ENCODE measurements at regions of chr17 and their contacts with region 1.

Region 1: DNA sequence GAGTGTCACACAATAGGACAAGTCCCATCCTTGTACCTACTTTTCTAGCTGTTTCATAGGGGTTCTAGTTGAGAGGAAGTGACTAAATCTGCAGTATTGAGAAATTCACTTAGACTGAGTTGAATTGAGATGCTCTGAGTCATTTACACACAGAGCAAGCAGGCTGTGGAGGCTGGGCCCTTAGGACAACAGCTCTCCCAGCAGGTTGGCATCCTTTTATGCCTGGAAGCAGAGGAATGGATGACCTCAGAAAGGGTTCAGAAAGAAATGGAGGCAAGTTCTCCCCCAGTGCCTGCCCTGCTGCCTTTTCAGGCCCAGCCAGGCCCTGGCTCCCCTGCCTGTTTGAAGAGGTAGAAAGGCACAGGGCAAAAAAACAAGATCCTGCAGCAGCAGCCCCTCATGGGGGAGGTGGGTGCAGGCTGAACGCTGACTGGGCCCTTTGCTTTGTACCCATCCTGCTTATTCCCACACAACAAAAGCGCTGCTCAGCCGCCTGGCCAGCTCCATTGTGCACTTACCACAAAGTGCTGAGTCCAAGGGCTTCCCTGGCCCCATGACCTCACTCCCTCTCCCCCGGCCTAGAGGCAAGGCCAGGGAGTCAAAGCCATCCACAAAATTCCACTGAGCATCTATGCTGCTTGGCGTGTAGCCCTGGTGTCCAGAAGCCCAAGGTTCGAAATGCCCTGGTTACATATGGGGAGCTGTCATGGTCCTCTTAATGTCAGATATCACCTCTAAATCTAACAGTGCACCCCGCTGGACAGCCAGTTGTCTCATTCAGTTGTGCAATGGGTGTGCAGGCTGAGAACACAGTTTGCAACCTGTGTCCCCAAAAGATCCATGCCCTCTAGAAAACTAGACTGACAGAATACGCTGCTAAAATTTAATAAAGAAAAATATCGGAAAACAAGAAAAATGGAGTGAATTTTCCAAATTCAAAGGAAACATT is 5.4 kb upstream of the CRYBA1 start:
- DNase-seq: peak; percentile 94
- H3K4me3 ChIP-seq: no peak overlapping the region
- H3K27ac ChIP-seq: peak overlapping the region; percentile 11
- H3K4me1 ChIP-seq: peaks cover 35% of the 10 kb centered on the region
- H3K27me3 ChIP-seq: no peaks in the 10 kb centered on the region
- CTCF ChIP-seq: peak; percentile 2 to 15

Region 2: DNA sequence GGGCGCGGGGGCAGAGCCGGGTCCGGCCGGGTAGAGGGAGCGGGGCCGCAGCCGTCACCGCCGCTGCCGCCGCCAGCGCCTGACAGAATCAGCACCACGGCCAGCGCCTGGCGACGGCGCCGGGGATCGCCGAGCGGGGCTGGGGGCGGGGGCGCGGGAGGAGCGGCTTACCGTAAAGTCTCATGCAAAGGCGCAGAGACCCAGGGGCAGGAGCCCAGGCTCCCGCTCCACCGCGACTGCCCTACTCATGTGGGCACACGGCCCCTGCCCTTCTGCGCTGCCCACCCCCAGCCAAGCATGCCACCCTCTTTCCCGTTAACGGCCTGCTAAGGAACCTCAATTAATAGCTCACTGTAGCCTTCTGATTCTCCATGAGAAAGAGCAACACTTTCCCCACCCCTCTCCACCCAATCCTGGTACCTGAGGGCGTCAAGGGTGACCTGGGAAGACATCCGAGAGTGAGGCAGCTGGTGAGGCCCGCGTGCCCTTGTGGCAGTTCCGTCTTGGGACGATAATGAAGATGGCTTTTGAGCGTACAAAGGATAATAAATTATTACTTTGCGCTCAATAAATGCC is 235.3 kb before region 1 on chr17 and contains the start of gene SEZ6:
- CTCF ChIA-PET with region 1: no interaction called
- dilution Hi-C with region 1: loop called (anchors 25 kb)
- in situ Hi-C with region 1: no loop called
- intact Hi-C with region 1: no loop called
- DNase-seq: peak; percentile 47
- H3K4me3 ChIP-seq: no peak within 1 kb of the TSS
- H3K27ac ChIP-seq: no peak within 1 kb of the TSS
- H3K4me1 ChIP-seq: no peaks in the 10 kb centered on the region
- H3K27me3 ChIP-seq: peaks cover 13% of the 10 kb centered on the region
- CTCF ChIP-seq: no peak
- total RNA-seq, gene SEZ6: not detected

Region 3: DNA sequence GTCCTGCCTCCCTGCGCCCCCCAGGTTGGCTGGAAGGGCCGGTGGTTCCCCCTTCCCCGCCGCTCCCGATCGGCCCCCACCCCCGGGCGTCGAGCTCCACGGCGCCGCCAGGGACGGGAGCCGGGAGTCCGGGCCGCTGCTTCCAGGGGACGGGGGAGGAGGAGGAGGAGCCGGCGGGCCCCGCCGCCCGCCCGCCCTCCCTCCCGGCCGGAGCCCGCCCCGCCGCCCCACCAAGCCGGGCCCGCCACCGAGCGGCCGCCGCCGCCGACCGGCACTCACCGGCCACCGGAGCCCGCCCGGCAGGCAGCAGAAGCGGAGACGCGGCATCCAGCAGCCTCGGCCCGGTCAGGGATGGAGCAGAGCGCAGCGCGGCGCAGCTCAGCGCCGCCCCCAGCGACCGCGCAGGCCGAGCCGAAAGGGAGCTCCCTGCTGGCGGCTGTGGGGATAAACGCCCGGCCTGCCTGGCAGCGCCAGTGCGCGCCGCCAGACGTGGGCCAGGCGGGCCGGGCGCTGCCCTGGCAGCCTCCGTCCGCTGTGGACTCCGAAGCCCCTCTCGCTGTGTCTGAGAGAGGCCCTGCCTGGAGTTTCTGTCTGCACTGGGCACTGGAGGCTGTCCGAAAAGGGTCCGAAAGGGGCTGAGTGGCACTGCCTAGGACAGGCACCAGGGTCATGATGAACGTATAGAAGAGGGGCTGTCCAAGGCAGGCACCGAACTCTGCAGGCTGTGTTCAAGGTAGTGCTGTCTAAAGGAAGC is 61.1 kb before region 1 on chr17 and contains the start of gene MYO18A:
- CTCF ChIA-PET with region 1: no interaction called
- dilution Hi-C with region 1: no loop called
- in situ Hi-C with region 1: no loop called
- intact Hi-C with region 1: loop called (anchors 1 kb)
- DNase-seq: peak; percentile 78
- H3K4me3 ChIP-seq: peak within 1 kb of the TSS; percentile 39 to 66 (median 56)
- H3K27ac ChIP-seq: peak within 1 kb of the TSS; percentile 95
- H3K4me1 ChIP-seq: peaks cover 47% of the 10 kb centered on the region
- H3K27me3 ChIP-seq: no peaks in the 10 kb centered on the region
- CTCF ChIP-seq: peak; percentile 63 to 83
- total RNA-seq, gene MYO18A: 62.3 to 102 TPM

Region 4: GRCh38 chr17:29252101-29252866 is 11.0 kb after region 1 on chr17:
- CTCF ChIA-PET with region 1: no interaction called
- dilution Hi-C with region 1: no loop called
- in situ Hi-C with region 1: no loop called
- intact Hi-C with region 1: loop called (anchors 2 kb)
- DNase-seq: no peak
- H3K4me3 ChIP-seq: no peak overlapping the region
- H3K27ac ChIP-seq: no peak overlapping the region
- H3K4me1 ChIP-seq: peaks cover 7% of the 10 kb centered on the region
- H3K27me3 ChIP-seq: no peaks in the 10 kb centered on the region
- CTCF ChIP-seq: peak; percentile 37 to 47

Measured in mammary epithelial cell (primary cell).